Transverse colon (tissue), 4 donors: ENCODE measurements at regions of chr15 and their contacts with region 1.

Region 1: DNA sequence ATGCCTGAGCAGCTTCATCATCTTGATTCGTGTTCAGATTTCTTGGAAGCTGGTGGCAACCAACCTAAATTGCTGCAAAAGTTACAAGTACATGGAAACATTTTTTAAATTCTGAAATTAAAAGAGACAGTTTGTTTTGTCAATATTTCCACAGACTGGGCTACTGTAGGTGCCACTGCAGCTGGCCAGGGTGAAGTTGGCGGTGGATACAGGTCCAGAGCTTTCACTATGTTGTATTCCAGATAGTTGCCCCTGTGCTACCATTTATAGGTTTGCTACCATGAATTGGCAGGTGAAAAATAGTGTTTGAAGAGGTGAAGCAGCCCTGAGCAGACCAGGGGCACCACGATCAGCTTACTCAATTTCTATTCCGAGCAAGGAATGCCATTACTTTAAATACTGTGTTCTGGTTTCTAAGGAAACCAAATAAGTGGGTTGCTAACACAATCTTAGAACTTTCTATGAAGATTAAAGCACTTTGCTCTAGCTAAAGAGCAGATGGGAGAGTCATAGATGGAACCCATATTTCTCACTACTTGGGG is 21.2 kb upstream of the SHC4 start:
- DNase-seq: no peak
- H3K4me3 ChIP-seq: no peak overlapping the region
- H3K27ac ChIP-seq: peak overlapping the region in 2 of 4 donors; percentile 0 to 16
- H3K4me1 ChIP-seq: peaks cover 0 to 9% (median 0%) of the 10 kb centered on the region in 4 donors
- H3K27me3 ChIP-seq: no peaks in the 10 kb centered on the region
- CTCF ChIP-seq: no peak
- EP300 ChIP-seq: no peak
- POLR2A ChIP-seq: no peak

Region 2: GRCh38 chr15:48896869-48897814 is 87.7 kb before region 1 on chr15:
- in situ Hi-C with region 1: no loop called
- intact Hi-C with region 1: no loop called
- DNase-seq: no peak
- H3K4me3 ChIP-seq: no peak overlapping the region
- H3K27ac ChIP-seq: peak overlapping the region; percentile 29 to 60 (median 48)
- H3K4me1 ChIP-seq: no peaks in the 10 kb centered on the region
- H3K27me3 ChIP-seq: no peaks in the 10 kb centered on the region
- CTCF ChIP-seq: no peak
- EP300 ChIP-seq: no peak
- POLR2A ChIP-seq: no peak

Region 3: DNA sequence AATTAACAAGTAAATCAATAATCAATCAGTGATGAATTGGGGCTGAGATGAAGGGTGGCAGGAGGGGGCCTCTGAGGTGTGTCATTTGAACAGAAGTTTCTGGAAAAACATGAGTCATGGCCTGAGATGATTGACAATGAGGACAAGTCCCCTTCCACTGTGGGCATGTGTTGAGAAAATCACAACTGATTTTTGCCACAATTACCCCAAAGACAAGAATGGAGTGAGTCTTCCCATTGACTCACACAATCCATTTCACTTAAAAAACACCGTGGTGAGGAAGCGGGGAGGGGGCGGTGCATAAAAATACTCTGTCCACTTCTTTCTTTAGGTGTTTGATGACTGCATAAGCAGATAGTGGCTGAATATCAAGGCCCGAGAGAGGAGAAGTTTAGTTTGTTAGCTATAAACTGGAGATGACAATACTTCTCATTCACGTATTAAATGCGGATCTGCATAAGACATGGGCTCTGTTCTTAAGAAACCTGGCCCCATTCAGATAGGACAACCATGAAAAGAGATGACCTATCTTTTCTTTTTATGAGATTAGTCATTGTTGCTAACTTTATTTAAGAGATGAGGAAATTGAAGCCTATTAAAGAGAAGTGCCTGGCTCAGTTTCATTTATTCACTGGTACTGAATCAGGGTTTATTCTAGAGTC is 55.9 kb before region 1 on chr15:
- in situ Hi-C with region 1: no loop called
- intact Hi-C with region 1: no loop called
- DNase-seq: no peak
- H3K4me3 ChIP-seq: no peak overlapping the region
- H3K27ac ChIP-seq: no peak overlapping the region
- H3K4me1 ChIP-seq: peaks cover 0 to 4% (median 0%) of the 10 kb centered on the region in 4 donors
- H3K27me3 ChIP-seq: no peaks in the 10 kb centered on the region
- CTCF ChIP-seq: no peak
- EP300 ChIP-seq: no peak
- POLR2A ChIP-seq: no peak

Region 4: DNA sequence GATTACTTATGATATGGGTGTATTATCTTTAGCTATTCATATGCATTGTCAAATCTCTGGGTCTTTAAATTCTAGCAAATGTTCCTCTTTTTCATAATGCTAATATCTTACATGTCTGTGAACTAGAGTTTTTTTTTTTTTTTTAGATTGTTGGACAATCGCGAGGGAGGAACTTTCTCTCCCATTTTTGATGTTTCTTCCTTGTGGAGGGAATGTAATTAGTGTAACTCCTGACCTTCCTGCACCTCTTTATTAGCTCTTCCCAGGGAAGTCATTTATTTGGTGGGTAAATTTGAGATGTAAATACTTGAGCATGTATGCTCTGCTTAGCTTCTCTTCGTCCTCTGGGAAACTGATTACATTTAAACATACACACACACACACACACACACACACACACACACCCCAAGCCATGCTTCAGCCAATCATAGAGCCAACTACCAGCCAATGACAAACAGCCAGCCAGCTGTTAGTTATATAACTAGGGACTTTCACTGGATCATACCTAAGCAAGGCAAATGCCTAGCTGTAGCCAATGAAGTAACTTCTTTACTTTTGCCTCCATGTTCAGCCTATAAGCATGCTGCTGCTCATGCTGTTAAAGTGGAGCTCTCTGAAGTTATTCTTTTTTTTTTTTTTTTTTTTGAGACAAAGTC is 1431.0 kb after region 1 on chr15:
- in situ Hi-C with region 1: no loop called
- intact Hi-C with region 1: loop called (anchors 5 kb)
- DNase-seq: no peak
- H3K4me3 ChIP-seq: no peak overlapping the region
- H3K27ac ChIP-seq: no peak overlapping the region
- H3K4me1 ChIP-seq: no peaks in the 10 kb centered on the region
- H3K27me3 ChIP-seq: no peaks in the 10 kb centered on the region
- CTCF ChIP-seq: no peak
- EP300 ChIP-seq: no peak
- POLR2A ChIP-seq: no peak